Posterior cingulate gyrus (tissue), 11 donors: ENCODE measurements at regions of chr19 and their contacts with region 1.

Region 1: GRCh38 chr19:50922317-50922853 is 11.2 kb upstream of the KLK4 start:
- DNase-seq: peak; percentile 43 to 95 (median 77)

Region 2: GRCh38 chr19:50376166-50377050 is 546.0 kb before region 1 on chr19 and contains the start of gene NR1H2:
- intact Hi-C with region 1: loop called (anchors 10 kb)
- DNase-seq: peak; percentile 94 to 100 (median 96)

Region 3: GRCh38 chr19:50994129-50994528 is 71.7 kb after region 1 on chr19:
- intact Hi-C with region 1: no loop called
- DNase-seq: no peak

Region 4: DNA sequence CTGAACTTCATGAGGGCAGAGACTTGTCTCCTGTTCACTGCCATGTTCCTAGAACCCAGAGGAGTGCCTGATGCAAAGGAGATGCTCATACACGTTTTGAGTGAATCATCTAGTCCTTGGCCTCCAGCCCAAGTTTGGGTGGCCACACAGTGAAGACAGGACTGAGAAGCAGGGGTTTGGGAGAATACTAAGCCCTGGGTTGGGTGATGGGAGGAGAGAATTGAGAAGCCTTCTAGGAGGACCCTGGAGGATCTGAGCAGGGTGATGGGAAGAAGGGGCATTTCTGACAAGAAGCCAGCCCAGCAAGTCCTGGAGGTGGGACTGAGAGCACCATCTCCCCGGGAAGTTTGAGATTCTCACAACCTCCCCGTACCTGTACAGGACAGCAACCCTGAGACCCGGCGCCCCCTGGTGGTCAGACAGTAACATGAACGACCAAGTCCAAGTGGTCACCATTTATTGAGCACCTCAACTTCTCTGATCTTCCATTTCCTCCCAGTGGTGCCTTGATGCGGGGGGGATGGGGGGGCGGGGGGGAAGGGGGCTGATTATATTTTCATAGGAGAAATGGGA is 174.9 kb after region 1 on chr19:
- intact Hi-C with region 1: loop called (anchors 5 kb)
- DNase-seq: peak; percentile 35 to 94 (median 72)